ENCODE measurements at regions of chr19 and their contacts with region 1.

Region 1: DNA sequence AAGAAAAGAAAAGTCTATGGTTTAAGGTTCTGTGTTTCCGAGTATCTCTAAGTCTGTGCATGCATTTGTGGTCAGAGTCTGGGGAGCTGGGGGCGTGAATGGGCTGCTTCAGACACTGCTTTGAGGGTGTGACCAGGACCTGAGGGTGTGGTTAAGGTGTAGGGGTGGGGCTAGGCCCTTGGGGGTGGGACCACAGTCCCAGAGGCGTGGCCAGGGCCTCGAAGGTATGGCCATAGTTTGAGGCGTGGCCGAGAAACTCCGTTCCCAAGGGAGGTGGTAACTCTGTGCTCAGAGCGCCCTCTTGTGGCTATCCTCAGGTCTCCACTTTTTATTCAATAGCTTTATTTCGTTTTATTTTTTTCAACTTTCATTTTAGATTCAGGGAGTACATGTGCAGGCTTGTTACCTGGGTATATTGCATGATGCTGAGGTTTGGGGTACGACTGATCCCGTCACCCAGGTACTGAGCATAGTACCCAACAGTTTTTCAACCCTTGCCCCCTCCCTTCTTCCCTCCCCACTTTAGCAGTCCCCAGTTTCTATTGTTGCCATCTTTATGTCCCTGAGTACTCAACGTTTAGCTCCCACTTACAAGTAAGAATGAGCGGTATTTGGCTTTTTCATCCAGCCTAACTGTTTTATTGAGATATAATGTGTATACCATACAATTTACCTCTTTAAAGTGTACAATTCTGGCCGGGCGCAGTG is 7.0 kb upstream of the CBLC start:
- DNase-seq: peak; percentile 94
- H3K4me3 Mint-ChIP-seq: peak overlapping the region; percentile 27
- H3K27ac Mint-ChIP-seq: peak overlapping the region; percentile 64
- H3K4me1 Mint-ChIP-seq: peaks cover 30% of the 10 kb centered on the region
- H3K27me3 Mint-ChIP-seq: peaks cover 2% of the 10 kb centered on the region

Region 2: DNA sequence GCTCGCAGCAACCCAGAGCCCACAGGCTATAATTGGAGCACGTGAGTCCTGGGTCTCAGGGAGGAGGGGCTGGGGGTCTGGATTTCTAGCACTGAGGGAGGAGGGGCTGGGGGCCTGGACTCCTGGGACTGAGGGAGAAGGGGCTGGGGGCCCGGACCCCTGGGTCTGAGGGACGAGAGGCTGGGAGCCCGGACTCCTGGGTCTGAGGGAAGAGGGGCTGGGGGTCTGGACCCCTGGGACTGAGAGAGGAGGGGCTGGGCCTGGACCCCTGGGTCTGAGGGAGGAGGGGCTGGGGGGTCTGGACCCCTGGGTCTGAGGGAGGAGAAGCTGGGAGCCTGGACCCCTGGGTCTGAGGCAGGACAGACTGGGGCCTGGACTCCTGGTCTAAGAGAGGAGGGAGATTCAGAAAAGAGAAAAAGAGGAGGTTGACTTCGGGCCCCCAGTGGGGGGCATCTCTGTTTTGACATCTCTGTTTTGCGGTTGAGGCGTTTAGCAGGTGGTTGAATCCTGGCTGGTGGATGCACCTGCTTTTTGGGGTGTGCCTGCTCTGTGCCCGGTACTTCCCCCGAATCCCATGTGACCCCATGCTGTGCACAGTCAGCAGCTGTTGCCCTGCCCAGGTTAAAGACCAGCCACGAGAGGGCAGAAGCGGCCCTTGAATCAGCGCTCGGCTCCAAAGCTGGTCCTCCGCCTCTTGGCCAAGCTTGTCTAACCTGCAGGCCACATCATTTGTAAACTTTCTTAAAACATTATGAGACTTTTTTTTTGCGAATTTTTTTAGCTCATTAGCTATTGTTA is 116.5 kb before region 1 on chr19:
- intact Hi-C with region 1: loop called (anchors 1 kb)
- DNase-seq: peak; percentile 66
- H3K4me3 Mint-ChIP-seq: no peak overlapping the region
- H3K27ac Mint-ChIP-seq: no peak overlapping the region
- H3K4me1 Mint-ChIP-seq: peaks cover 13% of the 10 kb centered on the region
- H3K27me3 Mint-ChIP-seq: no peaks in the 10 kb centered on the region

Region 3: GRCh38 chr19:44723952-44724319 is 46.8 kb before region 1 on chr19:
- intact Hi-C with region 1: loop called (anchors 1 kb)
- DNase-seq: peak; percentile 77
- H3K4me3 Mint-ChIP-seq: peak overlapping the region; percentile 67
- H3K27ac Mint-ChIP-seq: peak overlapping the region; percentile 25
- H3K4me1 Mint-ChIP-seq: peaks cover 58% of the 10 kb centered on the region
- H3K27me3 Mint-ChIP-seq: no peaks in the 10 kb centered on the region

Region 4: DNA sequence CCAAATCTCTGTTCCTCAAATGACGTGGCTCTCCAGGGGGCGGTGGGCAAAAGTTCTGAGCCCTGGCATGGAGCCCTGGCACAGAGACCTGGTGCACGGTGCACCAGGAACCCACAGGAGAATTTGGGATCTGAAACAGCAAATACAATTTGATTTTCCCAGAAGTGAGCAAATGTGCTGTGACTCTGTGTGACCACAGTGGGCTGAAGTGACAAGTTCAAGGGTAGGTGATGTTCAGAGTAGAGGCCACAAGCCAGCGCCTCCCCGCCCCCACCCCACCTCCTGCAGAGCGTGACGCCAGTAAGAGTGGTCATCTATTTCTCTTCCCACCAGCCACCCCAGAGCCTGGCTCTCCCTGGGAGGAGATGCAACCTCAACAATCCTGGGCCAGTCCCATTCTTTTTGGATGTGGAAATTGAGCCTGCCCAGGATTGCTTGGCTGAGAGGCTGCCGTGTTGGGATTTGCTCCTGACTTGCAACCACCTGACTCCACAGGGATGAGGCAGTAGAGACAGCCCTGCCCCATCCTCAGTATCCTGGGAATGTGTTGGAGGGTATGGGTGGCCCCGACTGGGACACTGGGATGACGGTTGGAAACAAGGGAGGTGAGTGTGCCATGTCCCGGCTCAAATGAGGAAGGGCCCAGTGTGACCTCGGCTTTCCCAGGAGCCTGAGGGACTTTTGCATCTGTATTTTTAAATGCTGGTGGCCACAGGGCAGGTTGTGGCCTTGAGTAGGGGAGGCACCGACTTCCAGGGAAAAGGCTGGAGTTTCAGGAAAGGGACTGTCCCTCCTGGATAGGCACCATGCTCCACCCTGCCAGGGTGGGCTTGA is 33.2 kb before region 1 on chr19:
- intact Hi-C with region 1: no loop called
- DNase-seq: no peak
- H3K4me3 Mint-ChIP-seq: no peak overlapping the region
- H3K27ac Mint-ChIP-seq: no peak overlapping the region
- H3K4me1 Mint-ChIP-seq: peaks cover 10% of the 10 kb centered on the region
- H3K27me3 Mint-ChIP-seq: peaks cover 11% of the 10 kb centered on the region

Region 5: DNA sequence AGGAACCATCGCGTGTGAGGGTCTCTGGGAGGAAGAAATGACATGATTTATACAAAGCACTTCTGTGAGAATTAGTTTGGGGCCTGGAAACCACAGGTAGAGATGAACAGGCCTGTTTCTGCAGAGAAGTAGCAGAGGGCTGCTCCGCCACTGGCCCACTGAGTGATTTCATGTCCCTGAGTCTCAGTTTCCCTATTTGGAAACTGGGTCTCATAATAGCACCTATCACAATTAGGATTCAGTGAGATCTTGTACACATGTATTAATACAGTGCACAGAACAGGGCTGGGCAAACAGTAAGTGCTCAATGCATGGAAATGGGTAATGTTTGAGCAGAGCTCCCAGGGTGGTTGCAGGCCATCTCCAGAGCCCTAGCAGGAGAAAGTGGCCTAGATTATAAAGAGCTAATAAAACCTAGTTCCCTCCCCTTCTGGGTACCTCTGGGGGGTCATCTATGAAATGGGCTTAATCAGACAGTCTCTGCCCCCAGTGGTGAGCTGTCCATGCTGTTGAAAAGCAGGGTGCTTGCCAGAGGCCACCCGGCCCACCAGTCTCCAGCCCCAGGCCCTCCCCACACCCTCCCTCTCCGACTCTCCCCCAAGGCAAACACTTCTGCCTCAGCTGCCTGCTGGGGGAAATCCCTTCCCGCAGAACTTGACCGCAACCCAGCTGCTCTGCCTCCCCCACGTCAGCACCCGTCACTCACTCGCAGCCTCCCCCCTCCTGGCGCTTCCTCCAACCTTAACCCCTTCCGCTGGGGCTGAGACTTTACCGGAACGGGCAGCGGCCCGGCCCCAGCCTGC is 17.7 kb before region 1 on chr19:
- intact Hi-C with region 1: loop called (anchors 1 kb)
- DNase-seq: peak; percentile 95
- H3K4me3 Mint-ChIP-seq: peak overlapping the region; percentile 88
- H3K27ac Mint-ChIP-seq: peak overlapping the region; percentile 90
- H3K4me1 Mint-ChIP-seq: peaks cover 60% of the 10 kb centered on the region
- H3K27me3 Mint-ChIP-seq: no peaks in the 10 kb centered on the region

Region 6: DNA sequence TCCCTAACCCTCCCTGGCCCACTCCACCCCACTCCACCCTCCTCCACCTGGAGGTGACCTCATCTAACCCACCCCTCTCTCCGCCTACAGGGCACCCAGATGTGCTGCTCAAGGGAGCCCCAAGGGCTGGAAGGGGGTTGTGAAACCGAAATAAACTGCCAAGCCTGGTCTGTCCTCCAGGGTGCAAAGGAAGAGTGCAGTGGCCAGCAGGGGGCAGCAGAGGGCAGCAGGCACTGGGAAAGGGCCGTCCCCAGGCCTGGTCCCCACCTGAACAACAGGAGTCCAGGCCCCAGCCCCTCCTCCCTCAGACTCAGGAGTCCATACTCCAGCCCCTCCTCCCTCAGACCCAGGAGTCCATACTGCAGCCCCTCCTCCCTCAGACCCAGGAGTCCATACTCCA is 29.8 kb after region 1 on chr19:
- intact Hi-C with region 1: no loop called
- DNase-seq: peak; percentile 78
- H3K4me3 Mint-ChIP-seq: no peak overlapping the region
- H3K27ac Mint-ChIP-seq: no peak overlapping the region
- H3K4me1 Mint-ChIP-seq: peaks cover 9% of the 10 kb centered on the region
- H3K27me3 Mint-ChIP-seq: peaks cover 13% of the 10 kb centered on the region

Measured in activated T-helper 1 cell treated with anti-CD3 and anti-CD28 coated beads, Interleukin-12 subunit alpha, Interleukin-12 subunit beta, Interleukin-2, Interleukin-4 antibody, amounts not matched to agents 30 ng/mL and 10 ng/mL and 1 ng/mL, durations not matched to agents 14 hours and 24 hours and 36 hours (primary cell).